ENCODE measurements at regions of chr19 and their contacts with region 1.

Region 1: GRCh38 chr19:58182989-58183816 is at the start of gene ZNF274:
- DNase-seq: peak; percentile 92 to 94 (median 93)
- H3K4me3 ChIP-seq: peak within 1 kb of the TSS; percentile 97 to 100
- H3K4me3 Mint-ChIP-seq: peak within 1 kb of the TSS; percentile 86 to 97 (median 92)
- H3K27ac ChIP-seq: peak within 1 kb of the TSS; percentile 97
- H3K27ac Mint-ChIP-seq: peak within 1 kb of the TSS; percentile 97 to 99 (median 99)
- H3K4me1 ChIP-seq: peaks cover 20% of the 10 kb centered on the region
- H3K4me1 Mint-ChIP-seq: peaks cover 12 to 25% (median 18%) of the 10 kb centered on the region in 4 donors
- H3K27me3 ChIP-seq: no peaks in the 10 kb centered on the region
- H3K27me3 Mint-ChIP-seq: no peaks in the 10 kb centered on the region
- total RNA-seq, gene ZNF274: 76.5 to 77.1 TPM

Region 2: DNA sequence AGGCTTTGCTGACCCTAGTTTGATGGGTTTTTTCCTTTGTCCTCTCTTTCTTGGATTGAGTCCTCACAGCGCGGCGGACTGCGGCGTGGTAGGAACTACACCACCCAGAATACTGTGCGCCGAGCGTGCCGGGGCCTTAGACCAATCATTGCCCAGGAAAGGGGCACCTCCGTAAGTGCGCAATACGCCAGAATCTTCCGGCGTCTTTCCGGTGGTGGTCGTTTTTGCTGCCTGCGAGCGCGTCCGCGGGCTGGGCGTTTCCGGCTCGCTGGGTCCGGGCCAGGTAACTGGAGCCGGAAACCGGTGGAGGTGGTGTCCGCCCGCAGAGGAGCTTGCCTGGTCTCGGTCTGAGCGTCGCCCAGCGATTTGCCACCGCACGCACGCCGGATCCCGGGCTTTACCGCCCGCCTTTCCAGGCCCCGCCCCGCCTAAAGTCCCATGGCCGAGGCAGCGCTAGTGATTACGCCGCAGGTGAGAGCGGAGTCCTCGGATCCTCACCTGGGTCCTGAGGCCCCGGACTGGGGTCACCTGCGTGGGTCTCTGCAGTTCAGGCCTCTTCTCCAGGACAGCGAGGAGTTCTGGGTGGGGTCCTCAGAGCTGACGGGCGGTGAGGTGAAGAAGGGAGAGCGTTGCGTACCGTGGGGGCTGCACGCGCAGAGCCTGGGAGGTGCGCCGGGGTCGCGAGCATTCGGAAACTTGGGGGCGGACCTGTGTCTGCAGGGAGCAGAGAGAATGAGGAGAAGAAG is 655.9 kb before region 1 on chr19 and contains the start of gene ZNF549:
- CTCF ChIA-PET with region 1: no interaction called
- POLR2A ChIA-PET with region 1: interaction called, 3 read pairs
- intact Hi-C with region 1: loop called (anchors 1 kb)
- DNase-seq: peak; percentile 88 to 93 (median 90)
- H3K4me3 ChIP-seq: peak within 1 kb of the TSS; percentile 15 to 99
- H3K4me3 Mint-ChIP-seq: peak within 1 kb of the TSS; percentile 86 to 98 (median 92)
- H3K27ac ChIP-seq: peak within 1 kb of the TSS; percentile 79
- H3K27ac Mint-ChIP-seq: peak within 1 kb of the TSS; percentile 86 to 97 (median 92)
- H3K4me1 ChIP-seq: peaks cover 16% of the 10 kb centered on the region
- H3K4me1 Mint-ChIP-seq: peaks cover 16 to 31% (median 22%) of the 10 kb centered on the region in 4 donors
- H3K27me3 ChIP-seq: no peaks in the 10 kb centered on the region
- H3K27me3 Mint-ChIP-seq: peaks cover 0 to 4% of the 10 kb centered on the region in 2 donors
- total RNA-seq, gene ZNF549: 20.5 to 21.8 TPM

Region 3: GRCh38 chr19:58196901-58197616 is 13.9 kb after region 1 on chr19:
- CTCF ChIA-PET with region 1: no interaction called
- POLR2A ChIA-PET with region 1: interaction called, 18 read pairs
- intact Hi-C with region 1: no loop called
- DNase-seq: peak in 4 of 5 donors; percentile 9 to 18 (median 13)
- H3K4me3 ChIP-seq: peak overlapping the region in 1 of 2 donors; percentile 0
- H3K4me3 Mint-ChIP-seq: peak overlapping the region in 2 of 8 donors; percentile 20 to 25
- H3K27ac ChIP-seq: no peak overlapping the region
- H3K27ac Mint-ChIP-seq: no peak overlapping the region
- H3K4me1 ChIP-seq: no peaks in the 10 kb centered on the region
- H3K4me1 Mint-ChIP-seq: peaks cover 0 to 3% (median 0%) of the 10 kb centered on the region in 4 donors
- H3K27me3 ChIP-seq: no peaks in the 10 kb centered on the region
- H3K27me3 Mint-ChIP-seq: no peaks in the 10 kb centered on the region

Region 4: GRCh38 chr19:58305065-58305931 is 122.1 kb after region 1 on chr19 and contains the start of gene ERVK3-1:
- CTCF ChIA-PET with region 1: interaction called, 4 read pairs
- POLR2A ChIA-PET with region 1: interaction called, 19 read pairs
- intact Hi-C with region 1: loop called (anchors 1 kb)
- DNase-seq: peak; percentile 93 to 97 (median 95)
- H3K4me3 ChIP-seq: peak within 1 kb of the TSS; percentile 54 to 83
- H3K4me3 Mint-ChIP-seq: peak within 1 kb of the TSS; percentile 97 to 100 (median 100)
- H3K27ac ChIP-seq: peak within 1 kb of the TSS; percentile 95
- H3K27ac Mint-ChIP-seq: peak within 1 kb of the TSS; percentile 97 to 100 (median 99)
- H3K4me1 ChIP-seq: peaks cover 31% of the 10 kb centered on the region
- H3K4me1 Mint-ChIP-seq: peaks cover 34 to 59% (median 45%) of the 10 kb centered on the region in 4 donors
- H3K27me3 ChIP-seq: no peaks in the 10 kb centered on the region
- H3K27me3 Mint-ChIP-seq: no peaks in the 10 kb centered on the region
- total RNA-seq, gene ERVK3-1: 72.3 to 76.6 TPM

Region 5: GRCh38 chr19:58400916-58401839 is 218.0 kb after region 1 on chr19:
- CTCF ChIA-PET with region 1: no interaction called
- POLR2A ChIA-PET with region 1: no interaction called
- intact Hi-C with region 1: loop called (anchors 2 kb)
- DNase-seq: peak; percentile 98 to 100 (median 99)
- H3K4me3 ChIP-seq: peak overlapping the region; percentile 57 to 59
- H3K4me3 Mint-ChIP-seq: peak overlapping the region; percentile 87 to 97 (median 91)
- H3K27ac ChIP-seq: peak overlapping the region; percentile 74
- H3K27ac Mint-ChIP-seq: peak overlapping the region; percentile 89 to 99 (median 97)
- H3K4me1 ChIP-seq: peaks cover 20% of the 10 kb centered on the region
- H3K4me1 Mint-ChIP-seq: peaks cover 5 to 20% (median 10%) of the 10 kb centered on the region in 4 donors
- H3K27me3 ChIP-seq: peaks cover 8% of the 10 kb centered on the region
- H3K27me3 Mint-ChIP-seq: peaks cover 6 to 9% of the 10 kb centered on the region in 2 donors

Region 6: DNA sequence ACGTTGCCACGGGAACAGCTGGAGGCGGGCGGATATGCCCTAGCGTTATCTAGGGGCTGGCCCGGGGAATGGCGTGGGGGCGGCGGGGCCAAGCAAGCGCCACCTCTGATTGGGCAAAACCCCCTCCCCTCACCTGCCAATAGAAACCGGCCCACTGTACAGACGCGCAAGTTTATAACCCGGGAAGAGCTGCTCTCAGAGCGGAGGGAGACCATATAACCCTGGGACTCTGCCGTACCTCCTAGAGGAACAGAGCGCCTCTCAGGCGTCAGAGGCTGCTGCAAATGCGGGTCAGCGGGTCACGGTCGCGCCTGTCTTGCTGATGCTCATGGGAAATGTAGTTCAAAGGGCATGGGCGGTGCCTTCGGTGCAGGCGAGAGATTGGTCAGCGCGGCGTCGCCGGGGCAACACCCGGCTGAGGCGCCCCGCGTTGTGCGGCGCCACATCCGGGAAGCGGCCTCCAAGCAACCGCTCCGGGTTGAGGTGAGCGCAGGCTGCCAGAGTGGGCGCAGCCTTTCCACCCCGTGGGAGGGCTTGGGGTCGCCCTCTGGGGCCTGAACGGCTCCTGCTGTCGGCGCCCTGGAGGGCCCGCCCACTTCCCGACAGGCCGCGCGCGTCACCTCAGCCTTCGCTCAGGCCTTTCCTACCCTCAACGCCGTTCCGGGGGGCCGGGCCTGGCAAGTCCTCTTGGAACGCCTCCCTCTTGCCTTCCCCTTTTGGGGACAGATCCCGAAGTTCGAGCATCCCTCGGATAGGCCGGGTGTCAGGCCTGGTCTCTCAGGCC is 292.7 kb after region 1 on chr19 and contains the start of gene ZNF446:
- CTCF ChIA-PET with region 1: no interaction called
- POLR2A ChIA-PET with region 1: interaction called, 5 read pairs
- intact Hi-C with region 1: loop called (anchors 2 kb)
- DNase-seq: peak; percentile 96 to 99 (median 97)
- H3K4me3 ChIP-seq: peak within 1 kb of the TSS; percentile 69 to 94
- H3K4me3 Mint-ChIP-seq: peak within 1 kb of the TSS; percentile 91 to 98 (median 96)
- H3K27ac ChIP-seq: peak within 1 kb of the TSS; percentile 90
- H3K27ac Mint-ChIP-seq: peak within 1 kb of the TSS; percentile 97 to 100 (median 99)
- H3K4me1 ChIP-seq: peaks cover 17% of the 10 kb centered on the region
- H3K4me1 Mint-ChIP-seq: peaks cover 9 to 33% (median 19%) of the 10 kb centered on the region in 4 donors
- H3K27me3 ChIP-seq: no peaks in the 10 kb centered on the region
- H3K27me3 Mint-ChIP-seq: no peaks in the 10 kb centered on the region
- total RNA-seq, gene ZNF446: 16.4 to 19.5 TPM

Region 7: DNA sequence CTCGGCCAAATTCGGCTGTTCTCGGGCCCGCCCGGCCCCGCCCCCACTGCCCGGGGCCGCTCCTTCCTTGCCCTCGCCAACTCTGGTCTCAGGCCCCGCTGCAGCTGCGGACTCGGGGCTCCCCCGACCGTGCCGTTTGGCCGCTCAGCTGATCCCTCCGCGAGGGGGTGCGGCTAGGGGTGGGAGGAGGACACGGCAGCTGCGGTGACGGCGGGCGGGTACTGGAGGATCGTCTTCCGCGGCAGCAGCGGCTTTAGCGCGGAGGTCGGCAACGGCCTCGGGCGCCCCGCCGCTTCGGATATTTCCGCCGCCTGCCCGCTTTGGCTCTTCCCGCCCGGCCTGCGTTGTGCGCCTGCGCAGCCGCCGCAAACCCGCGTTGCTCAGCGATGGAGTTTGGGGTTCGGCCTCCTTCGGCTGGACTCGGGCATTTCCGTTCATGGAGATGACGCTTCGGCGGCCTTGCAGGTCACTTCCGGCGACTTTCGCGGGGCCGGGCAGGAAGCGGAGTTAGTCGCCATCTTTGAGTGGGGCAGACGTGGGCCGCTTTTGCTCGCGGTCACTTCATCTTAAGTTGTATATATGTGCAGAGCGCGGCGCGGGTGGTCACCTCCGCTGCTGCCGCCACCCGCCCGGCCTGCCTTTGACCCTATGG is 375.5 kb after region 1 on chr19:
- CTCF ChIA-PET with region 1: no interaction called
- POLR2A ChIA-PET with region 1: interaction called, 11 read pairs
- intact Hi-C with region 1: no loop called
- DNase-seq: peak; percentile 99 to 100 (median 100)
- H3K4me3 ChIP-seq: peak overlapping the region; percentile 47 to 100
- H3K4me3 Mint-ChIP-seq: peak overlapping the region; percentile 92 to 98 (median 97)
- H3K27ac ChIP-seq: peak overlapping the region; percentile 99
- H3K27ac Mint-ChIP-seq: peak overlapping the region; percentile 97 to 99 (median 99)
- H3K4me1 ChIP-seq: peaks cover 79% of the 10 kb centered on the region
- H3K4me1 Mint-ChIP-seq: peaks cover 28 to 96% (median 61%) of the 10 kb centered on the region in 4 donors
- H3K27me3 ChIP-seq: no peaks in the 10 kb centered on the region
- H3K27me3 Mint-ChIP-seq: no peaks in the 10 kb centered on the region